BJ (cell line): ENCODE measurements at regions of chr7 and their contacts with region 1.

Region 1: DNA sequence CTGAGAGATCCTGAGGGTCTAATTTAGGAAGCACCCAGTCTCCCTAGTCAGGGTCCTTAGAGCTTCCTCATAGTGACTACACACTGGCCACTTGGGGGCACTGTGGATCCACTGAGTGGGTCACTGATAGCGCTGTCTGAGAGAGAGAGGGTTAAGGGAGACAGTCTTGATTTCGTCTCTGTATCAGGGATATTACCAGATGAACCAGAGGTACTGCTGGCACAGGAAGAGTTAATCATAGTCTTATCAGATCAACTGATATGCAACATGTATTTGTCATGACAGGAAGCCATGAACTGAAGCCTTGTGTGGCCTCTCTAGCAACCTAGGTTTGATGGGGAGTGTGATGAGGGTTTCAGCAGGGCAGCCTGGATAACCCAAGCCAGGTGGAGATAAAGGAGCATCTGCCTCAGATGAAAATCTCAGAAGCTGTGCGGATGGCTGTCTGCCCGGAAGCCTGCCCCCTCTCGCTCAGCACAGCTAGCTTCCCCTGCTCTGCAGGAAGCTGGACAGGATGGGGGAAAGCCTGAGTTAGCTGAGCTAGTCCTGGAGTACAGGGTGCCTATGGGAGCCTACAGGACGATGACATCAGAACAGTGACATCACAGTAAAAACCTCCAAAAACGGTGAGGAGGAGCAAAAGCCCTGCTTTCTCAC is 214.0 kb upstream of the PRSS1 start:
- DNase-seq: peak; percentile 42
- H3K4me3 ChIP-seq: no peak overlapping the region
- H3K27me3 ChIP-seq: no peaks in the 10 kb centered on the region
- CTCF ChIP-seq: peak; percentile 87

Region 2: GRCh38 chr7:142459551-142459963 is 75.7 kb before region 1 on chr7:
- CTCF ChIA-PET with region 1: interaction called, 25 read pairs
- POLR2A ChIA-PET with region 1: no interaction called
- DNase-seq: peak; percentile 41
- H3K4me3 ChIP-seq: no peak overlapping the region
- H3K27me3 ChIP-seq: no peaks in the 10 kb centered on the region
- CTCF ChIP-seq: peak; percentile 75

Region 3: GRCh38 chr7:142516038-142516501 is 19.2 kb before region 1 on chr7:
- CTCF ChIA-PET with region 1: interaction called, 48 read pairs
- POLR2A ChIA-PET with region 1: no interaction called
- DNase-seq: no peak
- H3K4me3 ChIP-seq: no peak overlapping the region
- H3K27me3 ChIP-seq: peaks cover 2% of the 10 kb centered on the region
- CTCF ChIP-seq: peak; percentile 83

Region 4: DNA sequence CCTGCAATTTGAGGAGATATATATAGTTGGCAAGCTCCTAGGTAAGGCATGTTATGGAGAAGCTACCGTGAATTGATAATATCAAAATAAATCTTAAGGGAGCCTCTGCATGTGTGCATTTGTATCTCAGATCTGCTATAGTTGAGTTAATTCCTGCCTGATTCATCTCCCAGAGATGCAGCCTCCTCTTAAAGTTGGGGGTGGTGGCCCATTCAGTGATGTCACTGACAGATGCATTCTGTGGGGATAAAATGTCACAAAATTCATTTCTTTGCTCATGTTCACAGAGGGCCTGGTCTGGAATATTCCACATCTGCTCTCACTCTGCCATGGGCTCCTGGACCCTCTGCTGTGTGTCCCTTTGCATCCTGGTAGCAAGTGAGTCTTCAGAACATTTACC is 28.2 kb after region 1 on chr7:
- CTCF ChIA-PET with region 1: interaction called, 65 read pairs
- POLR2A ChIA-PET with region 1: no interaction called
- DNase-seq: no peak
- H3K4me3 ChIP-seq: no peak overlapping the region
- H3K27me3 ChIP-seq: no peaks in the 10 kb centered on the region
- CTCF ChIP-seq: no peak

Region 5: DNA sequence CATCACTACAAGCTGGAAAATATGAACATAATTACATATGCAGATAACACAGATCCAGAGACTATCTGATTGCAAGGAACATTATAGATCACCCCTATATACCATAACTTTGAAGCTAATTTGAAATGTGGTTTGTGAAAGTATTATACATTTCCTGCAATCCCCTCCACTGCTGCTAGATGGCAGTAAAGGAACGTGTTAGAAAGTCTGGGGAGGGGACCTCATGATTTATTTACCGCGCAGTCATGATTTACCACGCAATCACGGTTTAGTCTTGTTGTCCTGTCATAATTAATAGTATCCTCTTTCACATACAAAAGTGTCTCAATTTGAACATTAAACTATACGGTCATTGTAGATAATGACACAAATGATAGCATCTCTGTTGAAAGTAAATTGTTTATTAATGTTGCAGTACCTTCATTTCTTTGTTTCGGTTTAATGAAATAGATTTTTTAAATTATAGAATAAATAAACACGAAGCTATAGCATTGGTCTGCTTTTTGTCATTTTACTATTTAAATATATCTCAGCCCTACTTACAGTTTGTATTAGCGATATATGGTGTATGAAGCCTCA is 68.7 kb after region 1 on chr7:
- CTCF ChIA-PET with region 1: interaction called, 38 read pairs
- POLR2A ChIA-PET with region 1: no interaction called
- DNase-seq: no peak
- H3K4me3 ChIP-seq: no peak overlapping the region
- H3K27me3 ChIP-seq: no peaks in the 10 kb centered on the region
- CTCF ChIP-seq: peak; percentile 87

Region 6: DNA sequence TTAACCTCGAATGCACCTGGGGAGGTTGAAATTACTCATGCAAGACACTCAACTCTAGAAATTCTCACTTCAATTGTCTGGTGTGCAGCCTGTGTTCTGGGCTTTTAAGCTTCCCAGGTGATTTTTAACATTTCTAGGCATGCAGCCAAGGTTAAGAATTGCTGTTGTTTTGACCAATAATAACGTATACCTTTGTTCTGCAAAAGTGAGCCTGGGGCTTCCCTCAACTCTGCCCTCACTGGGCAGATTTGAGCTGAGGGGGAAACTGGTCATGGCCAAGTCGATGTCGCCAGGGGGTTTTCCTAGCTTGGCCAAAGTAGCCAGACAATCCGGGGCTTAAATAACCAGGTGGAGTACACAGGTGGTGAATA is 236.1 kb after region 1 on chr7:
- CTCF ChIA-PET with region 1: interaction called, 14 read pairs
- POLR2A ChIA-PET with region 1: no interaction called
- DNase-seq: no peak
- H3K4me3 ChIP-seq: no peak overlapping the region
- H3K27me3 ChIP-seq: peaks cover 5% of the 10 kb centered on the region; the same call in 1 of the 2 replicates
- CTCF ChIP-seq: no peak